ENCODE measurements at regions of chr1 and their contacts with region 1.

Region 1: GRCh38 chr1:100100202-100100601 is 32.5 kb downstream of the SASS6 start:
- DNase-seq: no peak

Region 2: GRCh38 chr1:100377590-100378361 is 277.6 kb after region 1 on chr1:
- intact Hi-C with region 1: loop called in 1 of 2 experiments (anchors 5 kb)
- DNase-seq: no peak

Measured in posterior vena cava (tissue), 2 donors.